GM13976 (cell line): ENCODE measurements at regions of chr1 and their contacts with region 1.

Region 1: GRCh38 chr1:165933446-165934178 is 106.2 kb downstream of the UCK2 start:
- DNase-seq: no peak
- CTCF ChIP-seq: no peak

Region 2: GRCh38 chr1:166111430-166111829 is 177.8 kb after region 1 on chr1:
- in situ Hi-C with region 1: no loop called
- DNase-seq: no peak
- CTCF ChIP-seq: no peak

Region 3: GRCh38 chr1:166432655-166433054 is 499.0 kb after region 1 on chr1:
- in situ Hi-C with region 1: loop called (anchors 10 kb)
- DNase-seq: no peak
- CTCF ChIP-seq: no peak